ENCODE measurements at regions of chr11 and their contacts with region 1.

Region 1: GRCh38 chr11:105862736-105863367 is 159.2 kb downstream of the MSANTD4 start:
- DNase-seq: peak in 1 of 10 donors; percentile 28
- H3K4me3 ChIP-seq: peak overlapping the region in 2 of 59 donors; percentile 15 to 21
- H3K27ac ChIP-seq: peak overlapping the region in 8 of 59 donors; percentile 14 to 60 (median 22)
- H3K27me3 ChIP-seq: no peaks in the 10 kb centered on the region
- CTCF ChIP-seq: peak; percentile 60 to 96 (median 80)

Region 2: GRCh38 chr11:104609311-104610085 is 1253.4 kb before region 1 on chr11:
- intact Hi-C with region 1: loop called in 1 of 2 experiments (anchors 5 kb)
- DNase-seq: peak in 3 of 10 donors; percentile 18 to 37 (median 29)
- H3K4me3 ChIP-seq: peak overlapping the region in 13 of 59 donors; percentile 0 to 37 (median 19)
- H3K27ac ChIP-seq: peak overlapping the region in 48 of 59 donors; percentile 0 to 80 (median 50)
- H3K27me3 ChIP-seq: no peaks in the 10 kb centered on the region
- CTCF ChIP-seq: peak in 55 of 56 donors; percentile 52 to 91 (median 76)

Region 3: GRCh38 chr11:105609832-105610781 is 252.7 kb before region 1 on chr11 and contains the start of gene GRIA4:
- intact Hi-C with region 1: loop called (anchors 2 to 10 kb)
- DNase-seq: peak; percentile 64 to 90 (median 84)
- H3K4me3 ChIP-seq: peak within 1 kb of the TSS; percentile 59 to 91 (median 73)
- H3K27ac ChIP-seq: peak within 1 kb of the TSS; percentile 65 to 97 (median 92)
- H3K27me3 ChIP-seq: no peaks in the 10 kb centered on the region
- CTCF ChIP-seq: peak in 10 of 56 donors; percentile 3 to 40 (median 12)
- total RNA-seq, gene GRIA4: 41.9 to 209 (median 101) TPM

Region 4: GRCh38 chr11:105648762-105649161 is 214.1 kb before region 1 on chr11:
- intact Hi-C with region 1: no loop called
- DNase-seq: no peak
- H3K4me3 ChIP-seq: no peak overlapping the region
- H3K27ac ChIP-seq: no peak overlapping the region
- H3K27me3 ChIP-seq: no peaks in the 10 kb centered on the region
- CTCF ChIP-seq: no peak

Region 5: DNA sequence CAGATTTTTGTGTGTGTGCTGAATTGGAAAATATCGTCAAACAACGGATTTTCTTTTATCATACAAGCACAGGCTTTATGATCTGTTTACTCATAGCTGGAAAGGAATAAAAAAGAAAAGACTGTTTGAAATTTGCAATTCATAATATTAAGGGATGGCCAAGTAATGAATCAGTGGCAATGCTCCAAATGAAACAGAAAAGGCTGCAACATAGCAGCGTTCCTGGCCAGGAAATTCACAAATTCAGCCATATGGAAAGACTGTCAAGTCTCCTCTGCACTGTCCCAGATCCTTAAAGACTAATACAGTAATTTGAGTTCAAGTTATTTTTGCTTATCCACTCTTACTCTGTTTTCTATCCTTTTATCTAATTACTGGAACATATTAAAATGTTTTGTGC is 61.0 kb after region 1 on chr11:
- intact Hi-C with region 1: no loop called
- DNase-seq: peak in 1 of 10 donors; percentile 26
- H3K4me3 ChIP-seq: peak overlapping the region in 24 of 59 donors; percentile 1 to 48 (median 19)
- H3K27ac ChIP-seq: peak overlapping the region in 51 of 59 donors; percentile 1 to 77 (median 49)
- H3K27me3 ChIP-seq: no peaks in the 10 kb centered on the region
- CTCF ChIP-seq: no peak